ENCODE measurements at regions of chr15 and their contacts with region 1.

Region 1: DNA sequence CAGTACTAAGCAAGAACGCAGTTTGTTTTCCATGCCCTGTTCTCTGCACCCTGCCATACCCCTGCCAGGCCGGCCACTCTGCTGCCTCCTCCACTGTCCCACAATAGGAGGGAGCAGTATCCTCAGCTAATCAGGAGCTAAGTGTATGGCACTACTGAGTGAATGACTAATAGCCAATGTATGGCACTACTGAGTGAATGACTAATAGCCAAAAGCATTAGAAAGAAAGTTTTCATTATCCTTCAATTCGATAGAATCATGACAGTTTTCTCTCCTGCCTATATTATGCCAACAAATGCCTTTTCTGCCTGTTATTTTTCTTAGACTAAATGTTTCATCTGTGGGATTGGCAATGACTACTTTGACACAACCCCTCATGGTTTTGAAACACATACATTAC is 107.5 kb upstream of the CHRM5 start:
- DNase-seq: peak; percentile 38 to 76
- H3K4me3 ChIP-seq: no peak overlapping the region
- H3K27ac ChIP-seq: peak overlapping the region; percentile 49
- H3K4me1 ChIP-seq: peaks cover 29% of the 10 kb centered on the region
- H3K27me3 ChIP-seq: no peaks in the 10 kb centered on the region
- CTCF ChIP-seq: no peak

Region 2: GRCh38 chr15:33226559-33227181 is 634.1 kb before region 1 on chr15:
- CTCF ChIA-PET with region 1: no interaction called
- POLR2A ChIA-PET with region 1: interaction called, 11 read pairs
- intact Hi-C with region 1: no loop called
- DNase-seq: peak in 1 of 2 experiments; percentile 11
- H3K4me3 ChIP-seq: no peak overlapping the region
- H3K27ac ChIP-seq: no peak overlapping the region
- H3K4me1 ChIP-seq: no peaks in the 10 kb centered on the region
- H3K27me3 ChIP-seq: no peaks in the 10 kb centered on the region
- CTCF ChIP-seq: peak; percentile 51

Region 3: GRCh38 chr15:33846867-33847266 is 13.9 kb before region 1 on chr15:
- CTCF ChIA-PET with region 1: no interaction called
- POLR2A ChIA-PET with region 1: interaction called, 6 read pairs
- intact Hi-C with region 1: loop called (anchors 2 kb)
- DNase-seq: no peak
- H3K4me3 ChIP-seq: no peak overlapping the region
- H3K27ac ChIP-seq: no peak overlapping the region
- H3K4me1 ChIP-seq: no peaks in the 10 kb centered on the region
- H3K27me3 ChIP-seq: no peaks in the 10 kb centered on the region
- CTCF ChIP-seq: no peak